Dorsolateral prefrontal cortex (tissue), 120 donors: ENCODE measurements at regions of chr7 and their contacts with region 1.

Region 1: GRCh38 chr7:55365675-55366460 is 731 bp downstream of the LANCL2 start:
- DNase-seq: peak; percentile 84 to 97 (median 93)
- H3K4me3 ChIP-seq: peak overlapping the region; percentile 62 to 99 (median 93)
- H3K27ac ChIP-seq: peak overlapping the region; percentile 90 to 100 (median 100)
- H3K27me3 ChIP-seq: no peaks in the 10 kb centered on the region
- CTCF ChIP-seq: peak in 42 of 56 donors; percentile 8 to 67 (median 38)

Region 2: DNA sequence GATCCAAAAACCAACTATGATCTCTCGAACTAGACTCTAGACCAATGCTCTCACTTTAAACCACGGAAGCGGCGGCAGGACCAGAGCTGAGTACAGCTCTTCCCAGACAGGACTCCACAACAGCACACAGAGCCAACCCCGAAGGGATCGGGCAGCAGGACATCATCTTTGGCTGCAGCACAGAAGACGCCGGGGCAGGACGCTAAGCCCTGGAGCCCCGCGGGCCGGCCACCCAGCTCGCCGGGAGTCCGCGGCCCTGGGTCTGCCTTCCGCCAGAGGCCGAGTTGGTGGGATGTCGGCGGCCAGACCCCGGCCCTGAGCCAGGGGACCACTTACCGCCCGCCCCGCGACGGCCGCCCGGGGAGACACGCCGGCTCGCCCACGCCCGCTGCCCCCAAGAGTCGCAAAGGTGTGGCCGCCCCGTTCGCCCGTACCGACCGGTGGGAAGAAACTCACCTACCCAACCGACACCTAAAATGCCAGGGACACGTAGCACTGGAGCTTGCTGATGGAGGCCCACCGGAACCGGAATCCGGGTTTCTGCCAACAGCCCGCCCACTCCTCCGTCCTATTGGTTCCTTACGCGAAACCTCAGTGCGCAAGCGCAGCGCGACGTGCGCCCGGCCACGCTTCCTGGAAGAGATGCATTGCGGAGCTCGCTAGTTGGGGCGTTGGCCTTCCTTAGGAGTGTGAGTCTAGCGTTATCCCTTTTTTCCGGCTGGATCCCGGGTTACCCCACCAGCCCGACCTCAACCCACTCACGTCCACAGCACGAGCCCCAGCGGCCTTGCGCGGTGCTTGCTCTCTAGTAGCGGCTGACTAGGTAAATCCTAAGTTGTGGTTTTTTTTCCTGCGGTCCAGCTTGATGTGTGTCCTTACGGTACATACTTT is 606.9 kb before region 1 on chr7 and contains the start of gene SEC61G:
- intact Hi-C with region 1: loop called (anchors 2 to 5 kb)
- DNase-seq: peak; percentile 94 to 99 (median 96)
- H3K4me3 ChIP-seq: peak within 1 kb of the TSS; percentile 67 to 100 (median 93)
- H3K27ac ChIP-seq: peak within 1 kb of the TSS in 56 of 59 donors; percentile 48 to 95 (median 86)
- H3K27me3 ChIP-seq: no peaks in the 10 kb centered on the region
- CTCF ChIP-seq: peak in 34 of 56 donors; percentile 2 to 56 (median 28)
- total RNA-seq, gene SEC61G: 21.1 to 66.9 (median 42.4) TPM

Region 3: GRCh38 chr7:55325371-55325792 is 40.5 kb before region 1 on chr7:
- intact Hi-C with region 1: no loop called
- DNase-seq: peak in 1 of 10 donors; percentile 91
- H3K4me3 ChIP-seq: no peak overlapping the region
- H3K27ac ChIP-seq: peak overlapping the region in 1 of 59 donors; percentile 76
- H3K27me3 ChIP-seq: no peaks in the 10 kb centered on the region
- CTCF ChIP-seq: no peak

Region 4: GRCh38 chr7:55381696-55382095 is 15.8 kb after region 1 on chr7:
- intact Hi-C with region 1: loop called in 1 of 2 experiments (anchors 1 kb)
- DNase-seq: no peak
- H3K4me3 ChIP-seq: peak overlapping the region in 58 of 59 donors; percentile 2 to 63 (median 39)
- H3K27ac ChIP-seq: peak overlapping the region in 58 of 59 donors; percentile 14 to 93 (median 76)
- H3K27me3 ChIP-seq: no peaks in the 10 kb centered on the region
- CTCF ChIP-seq: no peak

Region 5: DNA sequence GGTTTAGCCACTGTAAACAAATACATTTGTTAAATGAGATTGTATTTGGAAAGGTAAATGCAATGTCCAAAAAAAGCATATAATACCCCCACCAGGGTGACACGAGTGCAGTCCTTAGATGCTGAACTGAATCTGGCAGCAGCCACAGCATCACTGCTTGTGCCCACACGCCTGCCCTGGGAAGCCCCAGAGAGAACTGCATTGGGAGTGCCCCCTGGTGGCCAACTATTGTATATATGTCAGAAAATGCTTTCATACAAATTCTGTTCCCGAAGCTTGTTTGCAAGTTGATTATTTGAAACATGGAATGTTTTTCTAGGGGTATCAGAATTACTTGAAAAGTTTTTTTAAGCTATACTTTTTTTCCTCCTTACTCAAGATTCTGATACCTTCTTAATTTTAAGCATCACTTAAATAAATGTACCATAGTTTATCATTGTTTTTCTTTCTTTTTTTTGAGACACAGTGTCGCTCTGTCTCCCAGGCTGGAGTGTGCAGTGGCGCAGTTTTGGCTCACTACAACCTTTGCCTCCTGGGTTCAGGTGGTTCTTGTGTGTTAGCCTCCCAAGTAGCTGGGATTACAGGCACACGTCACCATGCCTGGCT is 49.4 kb after region 1 on chr7:
- intact Hi-C with region 1: loop called (anchors 2 to 5 kb)
- DNase-seq: peak; percentile 64 to 88 (median 80)
- H3K4me3 ChIP-seq: no peak overlapping the region
- H3K27ac ChIP-seq: peak overlapping the region in 2 of 59 donors; percentile 12 to 23
- H3K27me3 ChIP-seq: no peaks in the 10 kb centered on the region
- CTCF ChIP-seq: peak; percentile 77 to 99 (median 91)

Region 6: DNA sequence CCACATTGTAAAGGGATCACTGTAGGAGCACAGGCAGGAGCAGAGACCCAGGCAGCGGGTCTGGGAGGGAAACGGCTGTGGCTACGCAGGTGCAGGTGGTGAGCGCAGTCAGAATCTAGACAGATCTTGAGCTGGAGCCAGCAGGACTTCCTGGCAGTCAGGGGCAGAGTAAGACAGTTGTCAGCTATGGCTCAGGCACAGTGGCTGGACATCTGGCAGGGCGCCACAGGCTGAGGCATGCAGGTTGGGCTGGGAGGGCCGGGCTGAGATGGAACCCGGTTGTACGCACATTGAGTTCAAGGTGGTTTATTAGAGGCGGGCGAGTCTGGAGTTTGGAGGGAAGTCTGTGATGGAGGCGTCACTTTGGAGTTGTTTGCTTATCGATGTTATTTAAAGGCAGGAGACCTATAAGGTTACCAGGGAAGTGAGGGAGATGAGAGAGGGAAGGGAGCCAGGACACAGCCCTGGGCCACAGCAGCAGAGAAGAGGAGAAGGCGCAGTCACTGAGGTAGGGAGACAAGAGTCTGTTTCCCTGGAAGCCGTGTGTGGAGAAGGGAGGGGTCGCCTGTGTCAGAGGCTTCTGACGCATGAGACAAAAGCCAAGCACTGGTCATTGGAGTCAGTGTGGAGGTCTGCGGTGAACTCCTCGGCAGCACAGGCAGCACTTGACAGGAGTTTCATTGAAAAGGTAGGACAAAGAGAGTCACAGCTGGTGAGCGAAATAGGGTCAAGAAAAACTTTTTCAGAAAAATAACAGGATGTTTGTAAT is 73.1 kb after region 1 on chr7:
- intact Hi-C with region 1: no loop called
- DNase-seq: peak in 1 of 10 donors; percentile 83
- H3K4me3 ChIP-seq: no peak overlapping the region
- H3K27ac ChIP-seq: no peak overlapping the region
- H3K27me3 ChIP-seq: no peaks in the 10 kb centered on the region
- CTCF ChIP-seq: no peak

Region 7: GRCh38 chr7:55951637-55952351 is 585.9 kb after region 1 on chr7 and contains the start of gene MRPS17:
- intact Hi-C with region 1: loop called in 1 of 2 experiments (anchors 10 kb)
- DNase-seq: peak; percentile 84 to 96 (median 94)
- H3K4me3 ChIP-seq: peak within 1 kb of the TSS; percentile 44 to 98 (median 88)
- H3K27ac ChIP-seq: peak within 1 kb of the TSS in 50 of 59 donors; percentile 1 to 89 (median 66)
- H3K27me3 ChIP-seq: no peaks in the 10 kb centered on the region
- CTCF ChIP-seq: peak in 13 of 56 donors; percentile 3 to 37 (median 17)
- total RNA-seq, gene MRPS17: 5.8 to 24.3 (median 17.4) TPM

Region 8: DNA sequence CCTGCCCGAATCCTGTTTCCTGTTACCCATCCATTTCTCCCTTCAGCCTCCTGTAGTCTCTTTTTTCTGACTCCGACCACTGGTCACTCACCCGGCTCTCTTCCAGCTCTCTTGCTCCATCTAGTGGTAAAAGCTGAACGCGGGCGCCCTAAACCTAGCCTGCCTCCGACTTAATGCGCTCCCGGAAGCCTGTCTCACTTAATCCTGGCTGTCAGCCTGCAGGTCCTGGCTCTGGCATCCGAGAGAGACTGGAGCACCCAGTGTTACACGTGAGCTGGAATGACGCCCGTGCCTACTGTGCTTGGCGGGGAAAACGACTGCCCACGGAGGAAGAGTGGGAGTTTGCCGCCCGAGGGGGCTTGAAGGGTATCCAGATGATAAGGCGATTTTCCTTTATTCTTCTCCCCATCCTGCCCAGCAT is 708.5 kb after region 1 on chr7:
- intact Hi-C with region 1: loop called in 1 of 2 experiments (anchors 10 kb)
- DNase-seq: peak in 9 of 10 donors; percentile 49 to 84 (median 70)
- H3K4me3 ChIP-seq: peak overlapping the region in 1 of 59 donors; percentile 27
- H3K27ac ChIP-seq: peak overlapping the region in 38 of 59 donors; percentile 3 to 71 (median 40)
- H3K27me3 ChIP-seq: no peaks in the 10 kb centered on the region
- CTCF ChIP-seq: peak; percentile 76 to 95 (median 90)